CD8-positive, alpha-beta T cell (primary cell): ENCODE measurements at regions of chr16 and their contacts with region 1.

Region 1: GRCh38 chr16:56673921-56674320 is 4.3 kb downstream of the MT1H start:
- DNase-seq: peak in 4 of 9 experiments; percentile 23 to 57 (median 34)
- ATAC-seq: peak; percentile 32
- H3K4me3 ChIP-seq: no peak overlapping the region
- H3K4me3 Mint-ChIP-seq: no peak overlapping the region
- H3K27ac ChIP-seq: no peak overlapping the region
- H3K27ac Mint-ChIP-seq: peak overlapping the region; percentile 11
- H3K4me1 ChIP-seq: peaks cover 12% of the 10 kb centered on the region
- H3K4me1 Mint-ChIP-seq: peaks cover 27% of the 10 kb centered on the region
- H3K27me3 ChIP-seq: peaks cover 7 to 13% of the 10 kb centered on the region in 2 experiments
- H3K27me3 Mint-ChIP-seq: peaks cover 23% of the 10 kb centered on the region
- CTCF ChIP-seq: peak; percentile 52

Region 2: GRCh38 chr16:56324406-56324805 is 349.5 kb before region 1 on chr16:
- CTCF ChIA-PET with region 1: no interaction called
- POLR2A ChIA-PET with region 1: no interaction called
- intact Hi-C with region 1: no loop called
- DNase-seq: no peak
- ATAC-seq: no peak
- H3K4me3 ChIP-seq: no peak overlapping the region
- H3K4me3 Mint-ChIP-seq: no peak overlapping the region
- H3K27ac ChIP-seq: no peak overlapping the region
- H3K27ac Mint-ChIP-seq: no peak overlapping the region
- H3K4me1 ChIP-seq: no peaks in the 10 kb centered on the region
- H3K4me1 Mint-ChIP-seq: no peaks in the 10 kb centered on the region
- H3K27me3 ChIP-seq: no peaks in the 10 kb centered on the region
- H3K27me3 Mint-ChIP-seq: no peaks in the 10 kb centered on the region
- CTCF ChIP-seq: no peak

Region 3: DNA sequence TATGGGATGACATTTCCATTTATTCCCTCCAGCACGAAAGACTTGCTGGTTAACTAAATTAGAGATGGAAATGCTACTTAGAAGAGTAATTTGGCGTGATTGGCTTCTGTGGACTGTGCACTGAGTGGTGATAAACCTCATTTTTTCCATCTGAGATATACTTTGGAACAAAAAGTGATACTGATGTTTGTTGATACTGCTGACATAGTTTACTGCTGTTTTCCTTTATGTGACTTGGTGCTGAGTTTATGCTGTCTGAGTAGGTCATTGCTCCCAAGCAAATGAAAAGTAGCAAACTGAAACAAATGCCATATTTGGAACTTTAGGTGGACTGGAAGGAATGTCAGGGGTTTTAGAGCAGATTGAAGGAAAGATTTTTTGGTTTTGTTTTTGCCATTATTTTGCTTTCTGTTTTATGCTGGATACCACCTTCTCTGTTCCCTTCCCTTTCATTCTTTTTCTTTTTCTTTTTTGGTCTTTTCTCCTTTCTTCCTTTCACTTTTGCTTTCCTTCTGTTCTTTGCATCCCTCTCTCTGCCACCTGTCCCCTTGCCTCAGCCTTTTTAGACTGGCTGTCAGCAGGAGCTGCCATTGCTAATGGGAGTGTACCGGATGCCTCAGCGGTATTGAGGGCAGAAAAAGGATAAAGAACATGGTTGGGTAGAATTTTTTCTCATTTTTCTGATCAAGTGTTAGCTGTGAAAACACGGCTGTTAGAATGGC is 97.8 kb after region 1 on chr16:
- CTCF ChIA-PET with region 1: no interaction called
- POLR2A ChIA-PET with region 1: no interaction called
- intact Hi-C with region 1: no loop called
- DNase-seq: no peak
- ATAC-seq: no peak
- H3K4me3 ChIP-seq: no peak overlapping the region
- H3K4me3 Mint-ChIP-seq: no peak overlapping the region
- H3K27ac ChIP-seq: no peak overlapping the region
- H3K27ac Mint-ChIP-seq: no peak overlapping the region
- H3K4me1 ChIP-seq: no peaks in the 10 kb centered on the region
- H3K4me1 Mint-ChIP-seq: peaks cover 35% of the 10 kb centered on the region
- H3K27me3 ChIP-seq: no peaks in the 10 kb centered on the region
- H3K27me3 Mint-ChIP-seq: no peaks in the 10 kb centered on the region
- CTCF ChIP-seq: no peak

Region 4: DNA sequence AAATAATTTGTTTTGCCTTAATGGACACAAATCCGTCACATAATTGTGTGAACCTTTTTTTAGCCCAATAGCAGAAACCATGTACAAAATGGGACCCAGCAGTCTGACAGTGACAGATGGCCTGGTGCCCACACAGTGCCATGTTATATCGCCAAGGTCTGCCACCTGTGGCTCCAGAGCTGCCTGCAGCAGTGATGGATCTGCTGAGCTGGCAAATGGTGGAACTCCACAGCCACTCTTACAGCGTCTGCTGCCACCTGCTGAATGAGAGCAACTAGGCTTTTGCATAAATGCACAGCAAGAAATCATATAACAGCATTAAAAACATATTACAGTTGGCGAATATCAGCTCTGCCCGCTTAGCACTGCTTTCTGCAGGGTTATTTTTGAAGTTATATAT is 115.4 kb after region 1 on chr16:
- CTCF ChIA-PET with region 1: interaction called, 8 read pairs
- POLR2A ChIA-PET with region 1: no interaction called
- intact Hi-C with region 1: loop called in 1 of 2 experiments (anchors 2 kb)
- DNase-seq: peak in 4 of 9 experiments; percentile 5 to 50 (median 44)
- ATAC-seq: peak; percentile 55
- H3K4me3 ChIP-seq: no peak overlapping the region
- H3K4me3 Mint-ChIP-seq: no peak overlapping the region
- H3K27ac ChIP-seq: no peak overlapping the region
- H3K27ac Mint-ChIP-seq: no peak overlapping the region
- H3K4me1 ChIP-seq: no peaks in the 10 kb centered on the region
- H3K4me1 Mint-ChIP-seq: peaks cover 3% of the 10 kb centered on the region
- H3K27me3 ChIP-seq: no peaks in the 10 kb centered on the region
- H3K27me3 Mint-ChIP-seq: no peaks in the 10 kb centered on the region
- CTCF ChIP-seq: peak; percentile 23